Panc1 (cell line): ENCODE measurements at regions of chr19 and their contacts with region 1.

Region 1: GRCh38 chr19:37867831-37868230 is 38.6 kb downstream of the WDR87 start:
- DNase-seq: no peak
- ATAC-seq: 0 out of 2 replicates have a peak, but pooled peaks have one; percentile 51
- H3K4me3 ChIP-seq: no peak overlapping the region
- H3K27ac ChIP-seq: no peak overlapping the region
- H3K4me1 ChIP-seq: no peaks in the 10 kb centered on the region
- H3K27me3 ChIP-seq: no peaks in the 10 kb centered on the region
- CTCF ChIP-seq: no peak

Region 2: DNA sequence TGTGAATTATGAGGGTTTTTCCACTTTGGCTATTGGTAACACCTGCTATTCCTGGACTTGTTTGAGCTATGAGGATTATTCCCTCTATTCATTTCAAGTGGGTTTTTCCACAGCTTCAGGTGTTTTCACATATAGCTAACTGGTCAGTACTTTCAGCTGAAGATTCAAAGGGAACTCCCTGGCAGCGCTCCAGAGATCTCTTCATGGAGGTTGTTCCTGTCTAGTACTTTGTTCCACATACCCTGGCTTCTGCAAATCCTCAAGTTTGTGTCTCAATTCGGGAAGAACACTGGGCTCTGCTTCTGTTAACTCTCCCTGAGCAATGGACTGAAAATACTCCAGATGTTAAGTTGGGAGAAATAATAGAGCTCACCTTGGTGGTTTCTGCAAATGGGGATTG is 142.7 kb before region 1 on chr19:
- CTCF ChIA-PET with region 1: no interaction called
- POLR2A ChIA-PET with region 1: no interaction called
- in situ Hi-C with region 1: no loop called
- intact Hi-C with region 1: no loop called
- DNase-seq: no peak
- ATAC-seq: no peak
- H3K4me3 ChIP-seq: no peak overlapping the region
- H3K27ac ChIP-seq: no peak overlapping the region
- H3K4me1 ChIP-seq: no peaks in the 10 kb centered on the region
- H3K27me3 ChIP-seq: no peaks in the 10 kb centered on the region
- CTCF ChIP-seq: no peak

Region 3: GRCh38 chr19:37803250-37803854 is 64.5 kb before region 1 on chr19:
- CTCF ChIA-PET with region 1: no interaction called
- POLR2A ChIA-PET with region 1: no interaction called
- in situ Hi-C with region 1: loop called (anchors 5 kb)
- intact Hi-C with region 1: no loop called
- DNase-seq: no peak
- ATAC-seq: no peak
- H3K4me3 ChIP-seq: no peak overlapping the region
- H3K27ac ChIP-seq: no peak overlapping the region
- H3K4me1 ChIP-seq: no peaks in the 10 kb centered on the region
- H3K27me3 ChIP-seq: no peaks in the 10 kb centered on the region
- CTCF ChIP-seq: no peak

Region 4: DNA sequence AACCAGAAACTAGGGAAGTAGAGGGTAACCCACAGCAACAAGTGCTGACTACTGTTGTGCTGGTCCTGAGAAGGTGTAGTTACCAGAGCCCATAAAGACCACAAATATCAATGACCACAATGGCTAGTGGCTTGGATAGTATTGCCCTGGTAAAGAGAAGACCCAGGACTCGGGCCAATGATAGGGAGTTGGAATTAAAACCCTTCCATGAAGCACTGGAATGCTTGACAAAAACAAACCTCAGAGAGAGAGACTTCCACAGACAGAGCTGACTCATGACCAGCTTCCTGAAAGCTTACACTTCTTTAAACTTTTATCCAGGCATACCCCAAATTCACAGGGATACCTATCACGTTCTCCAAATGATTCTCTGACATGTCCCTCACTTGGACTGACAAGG is 21.9 kb before region 1 on chr19:
- CTCF ChIA-PET with region 1: no interaction called
- POLR2A ChIA-PET with region 1: no interaction called
- in situ Hi-C with region 1: no loop called
- intact Hi-C with region 1: no loop called
- DNase-seq: no peak
- ATAC-seq: no peak
- H3K4me3 ChIP-seq: no peak overlapping the region
- H3K27ac ChIP-seq: no peak overlapping the region
- H3K4me1 ChIP-seq: no peaks in the 10 kb centered on the region
- H3K27me3 ChIP-seq: no peaks in the 10 kb centered on the region
- CTCF ChIP-seq: no peak